Caco-2 (cell line): ENCODE measurements at regions of chr10 and their contacts with region 1.

Region 1: GRCh38 chr10:51892965-51893658 is 193.7 kb upstream of the CSTF2T start:
- DNase-seq: peak in 1 of 2 experiments; percentile 35
- H3K4me3 ChIP-seq: no peak overlapping the region
- H3K4me3 Mint-ChIP-seq: no peak overlapping the region
- H3K27ac Mint-ChIP-seq: no peak overlapping the region
- H3K4me1 ChIP-seq: no peaks in the 10 kb centered on the region
- H3K4me1 Mint-ChIP-seq: no peaks in the 10 kb centered on the region
- H3K27me3 ChIP-seq: no peaks in the 10 kb centered on the region
- H3K27me3 Mint-ChIP-seq: peaks cover 6% of the 10 kb centered on the region
- CTCF ChIP-seq: peak; percentile 47 to 80

Region 2: DNA sequence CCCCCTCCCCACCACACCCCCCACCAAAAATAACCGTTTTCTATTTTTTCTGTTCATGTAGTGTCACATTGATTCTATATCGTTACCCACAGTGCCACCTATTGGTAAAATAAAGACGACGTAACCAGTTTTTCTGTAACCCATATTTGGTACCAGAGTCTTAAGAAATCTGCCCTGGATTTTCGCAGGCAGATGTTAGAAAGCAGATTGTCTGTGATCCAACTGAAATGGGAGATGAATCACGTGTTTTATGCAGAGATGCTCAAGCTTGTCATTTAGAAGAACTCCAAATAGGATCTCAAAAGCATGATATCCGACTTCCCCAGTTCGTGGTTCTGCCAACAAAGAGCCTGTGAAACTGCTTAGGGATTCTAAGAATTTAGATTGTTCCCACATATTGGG is 67.4 kb after region 1 on chr10:
- CTCF ChIA-PET with region 1: no interaction called
- POLR2A ChIA-PET with region 1: no interaction called
- intact Hi-C with region 1: loop called (anchors 5 kb)
- DNase-seq: peak in 1 of 2 experiments; percentile 59
- H3K4me3 ChIP-seq: no peak overlapping the region
- H3K4me3 Mint-ChIP-seq: no peak overlapping the region
- H3K27ac Mint-ChIP-seq: no peak overlapping the region
- H3K4me1 ChIP-seq: no peaks in the 10 kb centered on the region
- H3K4me1 Mint-ChIP-seq: no peaks in the 10 kb centered on the region
- H3K27me3 ChIP-seq: no peaks in the 10 kb centered on the region
- H3K27me3 Mint-ChIP-seq: peaks cover 31% of the 10 kb centered on the region
- CTCF ChIP-seq: peak; percentile 73 to 78